ENCODE measurements at regions of chr20 and their contacts with region 1.

Region 1: GRCh38 chr20:47258745-47259695 is 97.5 kb downstream of the ZMYND8 start:
- DNase-seq: peak; percentile 98
- ATAC-seq: peak; percentile 62
- H3K4me3 ChIP-seq: peak overlapping the region; percentile 3; the same call in 1 of the 2 replicates
- H3K27ac ChIP-seq: peak overlapping the region; percentile 86
- H3K4me1 ChIP-seq: peaks cover 58% of the 10 kb centered on the region
- H3K27me3 ChIP-seq: no peaks in the 10 kb centered on the region
- CTCF ChIP-seq: no peak
- EP300 ChIP-seq: peak in 1 of 2 experiments; percentile 90; a peak in 2 of 4 replicates
- POLR2A ChIP-seq: no peak; the same call in 1 of the 2 replicates
- RAD21 ChIP-seq: no peak

Region 2: DNA sequence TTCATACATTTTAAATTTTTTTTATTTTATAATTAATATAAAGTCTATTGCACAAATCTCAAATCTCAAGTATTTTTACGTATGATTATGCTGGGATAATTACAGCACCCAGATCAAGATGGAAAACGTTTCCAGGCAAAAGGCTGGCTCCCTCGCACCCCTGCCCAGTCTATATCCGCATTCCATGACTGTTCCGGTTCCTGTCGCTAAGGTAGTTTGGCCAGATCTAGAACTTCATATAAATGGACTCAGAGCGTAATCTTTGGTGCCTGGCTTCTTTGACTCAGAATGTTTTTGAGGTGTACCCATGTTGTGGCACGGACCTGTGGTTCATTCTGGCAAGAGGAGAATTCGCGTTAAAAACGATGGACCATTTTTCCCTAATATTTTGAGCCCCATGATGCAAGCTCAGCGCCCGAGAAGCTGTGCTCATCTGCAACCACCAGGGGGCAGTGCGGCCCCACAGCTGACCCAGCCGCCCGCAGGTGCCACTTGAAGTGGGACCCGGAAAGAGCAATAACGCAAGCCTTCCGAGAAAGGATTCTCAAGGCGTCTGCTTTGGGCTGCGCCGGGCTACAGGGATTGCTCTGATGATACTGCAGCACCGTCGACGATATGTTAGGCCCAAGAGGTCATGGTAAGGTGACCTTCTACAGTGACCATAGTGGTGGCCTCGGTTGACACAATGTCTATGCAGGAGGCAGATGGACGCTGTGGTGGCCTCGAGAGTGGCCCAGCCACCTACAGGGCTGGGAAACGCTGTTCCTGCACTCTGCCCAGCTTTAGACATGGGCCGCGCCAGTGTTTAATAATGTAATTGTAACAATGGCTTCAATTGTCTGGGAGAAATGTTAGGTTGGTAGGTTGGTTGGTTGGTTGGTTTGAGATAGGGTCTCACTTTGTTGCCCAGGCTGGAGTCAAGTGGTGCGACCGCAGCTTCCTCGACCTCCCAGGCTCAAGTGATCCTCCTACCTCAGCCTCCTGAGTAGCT is 62.6 kb before region 1 on chr20:
- CTCF ChIA-PET with region 1: interaction called, 6 read pairs
- POLR2A ChIA-PET with region 1: no interaction called
- RAD21 ChIA-PET with region 1: interaction called, 13 read pairs
- SMC1A ChIA-PET with region 1: interaction called, 11 read pairs
- in situ Hi-C with region 1: no loop called
- intact Hi-C with region 1: no loop called
- DNase-seq: peak; percentile 19
- ATAC-seq: peak; percentile 86
- H3K4me3 ChIP-seq: no peak overlapping the region
- H3K27ac ChIP-seq: no peak overlapping the region
- H3K4me1 ChIP-seq: peaks cover 17% of the 10 kb centered on the region
- H3K27me3 ChIP-seq: peaks cover 0 to 1% of the 10 kb centered on the region in 2 experiments; a peak in 1 of 4 replicates
- CTCF ChIP-seq: peak; percentile 91 to 97 (median 95)
- EP300 ChIP-seq: no peak
- POLR2A ChIP-seq: no peak
- RAD21 ChIP-seq: peak; percentile 95

Region 3: GRCh38 chr20:47356526-47357295 is 97.7 kb after region 1 on chr20 and contains the start of gene ZMYND8:
- CTCF ChIA-PET with region 1: interaction called, 4 read pairs
- POLR2A ChIA-PET with region 1: interaction called, 26 read pairs
- RAD21 ChIA-PET with region 1: interaction called, 20 read pairs
- SMC1A ChIA-PET with region 1: interaction called, 12 read pairs
- in situ Hi-C with region 1: no loop called
- intact Hi-C with region 1: no loop called
- DNase-seq: peak; percentile 95
- ATAC-seq: peak; percentile 73
- H3K4me3 ChIP-seq: peak within 1 kb of the TSS; percentile 77
- H3K27ac ChIP-seq: peak within 1 kb of the TSS; percentile 99
- H3K4me1 ChIP-seq: peaks cover 46% of the 10 kb centered on the region
- H3K27me3 ChIP-seq: no peaks in the 10 kb centered on the region
- CTCF ChIP-seq: no peak
- EP300 ChIP-seq: no peak
- POLR2A ChIP-seq: no peak
- RAD21 ChIP-seq: no peak
- polyA plus RNA-seq, gene ZMYND8: 12.9 to 18.4 TPM

Region 4: DNA sequence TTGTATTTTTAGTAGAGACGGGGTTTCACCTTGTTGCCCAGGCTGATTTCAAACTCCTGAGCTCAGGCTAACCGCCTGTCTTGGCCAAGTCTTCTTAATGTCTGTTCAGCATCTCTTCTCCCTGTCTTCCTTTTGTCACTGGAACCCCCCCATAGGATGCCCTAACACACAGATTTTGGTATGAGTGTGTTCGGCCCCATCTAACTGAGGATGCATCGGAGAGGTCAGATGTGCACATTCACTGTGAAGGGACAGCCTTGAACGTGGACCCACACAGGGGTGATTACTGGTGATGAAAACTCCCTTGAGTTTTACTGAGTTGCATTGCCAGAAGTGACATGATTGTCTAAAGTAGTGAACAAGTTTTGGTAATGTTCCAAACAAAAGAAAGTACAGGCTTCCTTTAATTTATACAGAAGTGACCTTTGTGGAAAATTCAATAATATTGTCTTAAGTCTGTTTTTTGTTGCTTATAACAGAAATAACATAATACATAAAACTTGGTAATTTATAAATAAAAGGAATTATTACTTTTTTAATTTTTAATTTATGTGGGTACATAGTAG is 202.2 kb after region 1 on chr20:
- CTCF ChIA-PET with region 1: no interaction called
- POLR2A ChIA-PET with region 1: no interaction called
- RAD21 ChIA-PET with region 1: no interaction called
- SMC1A ChIA-PET with region 1: no interaction called
- in situ Hi-C with region 1: no loop called
- intact Hi-C with region 1: no loop called
- DNase-seq: no peak
- ATAC-seq: no peak
- H3K4me3 ChIP-seq: no peak overlapping the region
- H3K27ac ChIP-seq: no peak overlapping the region
- H3K4me1 ChIP-seq: no peaks in the 10 kb centered on the region
- H3K27me3 ChIP-seq: no peaks in the 10 kb centered on the region
- CTCF ChIP-seq: no peak
- EP300 ChIP-seq: no peak
- POLR2A ChIP-seq: no peak
- RAD21 ChIP-seq: no peak

Measured in GM12878 (cell line).